Ovary (tissue), 10 donors: ENCODE measurements at regions of chr20 and their contacts with region 1.

Region 1: GRCh38 chr20:44460795-44461141 is 14.9 kb upstream of the TTPAL start:
- DNase-seq: no peak
- H3K4me3 ChIP-seq: no peak overlapping the region
- H3K27ac ChIP-seq: no peak overlapping the region
- H3K4me1 ChIP-seq: no peaks in the 10 kb centered on the region
- H3K27me3 ChIP-seq: no peaks in the 10 kb centered on the region
- CTCF ChIP-seq: peak; percentile 51 to 71 (median 58)
- EP300 ChIP-seq: no peak
- POLR2A ChIP-seq: no peak

Region 2: DNA sequence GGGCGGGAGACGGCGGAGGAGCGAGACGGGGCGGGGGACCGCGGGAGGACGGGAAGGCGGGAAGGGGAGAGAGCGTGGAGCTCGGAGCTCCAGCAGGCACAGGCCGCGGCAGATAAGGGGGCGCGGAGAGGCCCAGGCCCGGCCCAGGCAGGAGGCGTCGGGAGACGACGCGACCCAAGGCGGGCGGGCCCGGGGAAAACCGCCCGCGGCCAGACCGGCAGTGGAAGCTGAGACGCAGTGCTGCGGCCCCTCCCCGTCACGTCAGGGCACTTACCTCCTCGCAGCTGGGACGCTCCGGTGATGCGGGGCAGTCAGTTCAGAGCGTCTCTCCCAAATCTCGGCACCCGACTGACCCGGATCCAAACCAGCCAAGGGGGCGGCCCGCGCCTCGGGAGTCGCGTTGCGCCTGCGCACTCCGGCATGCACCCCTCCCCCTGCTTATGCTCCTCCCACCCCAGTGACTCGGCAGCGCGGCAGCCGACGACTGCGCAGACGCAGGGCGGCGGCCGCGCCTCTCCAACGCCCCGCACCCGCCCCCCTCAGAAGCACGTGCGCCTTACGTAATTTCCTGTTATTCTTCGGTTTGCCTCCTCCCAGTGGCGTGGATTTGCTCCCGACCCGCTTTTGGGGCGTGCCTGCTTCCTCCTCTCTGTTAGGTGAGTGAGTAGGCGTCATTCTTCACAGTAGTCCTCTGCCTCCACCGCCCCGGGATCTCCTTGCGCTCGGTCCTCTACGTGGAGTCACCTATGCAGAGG is 250.2 kb before region 1 on chr20 and contains the start of gene OSER1:
- intact Hi-C with region 1: loop called in 2 of 4 experiments (anchors 5 to 10 kb)
- DNase-seq: peak; percentile 96 to 99 (median 98)
- H3K4me3 ChIP-seq: peak within 1 kb of the TSS; percentile 70
- H3K27ac ChIP-seq: peak within 1 kb of the TSS; percentile 86 to 98
- H3K4me1 ChIP-seq: peaks cover 1% of the 10 kb centered on the region
- H3K27me3 ChIP-seq: no peaks in the 10 kb centered on the region
- CTCF ChIP-seq: peak in 1 of 3 donors; percentile 5
- EP300 ChIP-seq: peak; percentile 88
- POLR2A ChIP-seq: peak; percentile 92
- total RNA-seq, gene OSER1: 27.7 to 40.1 (median 37.2) TPM

Region 3: GRCh38 chr20:44217342-44218092 is 243.3 kb before region 1 on chr20:
- intact Hi-C with region 1: loop called in 2 of 4 experiments (anchors 5 to 10 kb)
- DNase-seq: peak; percentile 49 to 63 (median 59)
- H3K4me3 ChIP-seq: no peak overlapping the region
- H3K27ac ChIP-seq: no peak overlapping the region
- H3K4me1 ChIP-seq: peaks cover 3% of the 10 kb centered on the region
- H3K27me3 ChIP-seq: no peaks in the 10 kb centered on the region
- CTCF ChIP-seq: peak; percentile 34 to 60 (median 43)
- EP300 ChIP-seq: no peak
- POLR2A ChIP-seq: no peak

Region 4: DNA sequence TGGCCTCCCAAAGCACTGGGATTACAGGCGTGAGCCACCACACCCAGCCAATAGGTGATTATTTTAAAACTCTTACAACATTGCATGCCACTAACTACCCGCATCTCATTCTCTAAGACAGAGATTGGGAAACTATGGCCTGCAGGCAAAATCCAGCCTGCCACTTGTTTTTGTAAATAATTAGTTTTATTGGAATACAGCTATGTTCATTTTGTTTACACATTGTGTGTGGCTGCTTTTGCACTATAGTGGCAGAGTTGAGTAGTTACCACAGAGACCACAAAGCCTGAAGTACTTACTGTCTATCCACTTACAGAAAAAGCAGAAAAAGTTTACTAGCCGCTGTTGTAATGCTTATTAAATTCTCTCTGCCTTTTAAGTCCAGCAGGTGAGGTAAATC is 105.2 kb after region 1 on chr20:
- intact Hi-C with region 1: no loop called
- DNase-seq: no peak
- H3K4me3 ChIP-seq: no peak overlapping the region
- H3K27ac ChIP-seq: no peak overlapping the region
- H3K4me1 ChIP-seq: peaks cover 4% of the 10 kb centered on the region
- H3K27me3 ChIP-seq: no peaks in the 10 kb centered on the region
- CTCF ChIP-seq: no peak
- EP300 ChIP-seq: no peak
- POLR2A ChIP-seq: no peak

Region 5: DNA sequence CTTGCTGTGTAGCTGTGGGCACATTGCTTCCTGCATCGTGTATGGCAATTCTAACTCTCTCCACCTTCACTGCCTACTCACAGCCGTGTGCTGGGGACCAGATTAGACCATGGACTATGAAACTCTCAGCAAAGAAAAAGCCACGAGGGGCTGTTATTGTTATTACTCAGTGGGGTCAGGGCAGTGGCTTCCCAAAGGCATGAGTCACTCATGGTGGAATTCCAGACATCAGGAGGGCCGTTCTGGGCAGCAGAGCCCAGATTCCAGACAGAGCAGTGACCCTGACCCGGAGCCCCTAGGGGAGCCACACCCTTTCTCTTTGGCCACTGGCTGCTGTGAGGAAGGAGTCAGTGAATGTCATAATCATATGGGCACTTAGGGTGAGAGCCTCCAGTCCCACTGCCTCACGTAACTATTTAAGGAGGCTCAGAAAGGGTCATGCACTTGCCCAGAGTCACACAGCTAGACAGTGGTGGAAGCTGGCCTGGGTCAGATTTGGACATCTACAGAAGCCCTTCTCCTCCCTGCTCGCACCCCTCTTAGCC is 232.2 kb after region 1 on chr20:
- intact Hi-C with region 1: no loop called
- DNase-seq: peak; percentile 83 to 92 (median 90)
- H3K4me3 ChIP-seq: no peak overlapping the region
- H3K27ac ChIP-seq: peak overlapping the region; percentile 36 to 52
- H3K4me1 ChIP-seq: peaks cover 29% of the 10 kb centered on the region
- H3K27me3 ChIP-seq: no peaks in the 10 kb centered on the region
- CTCF ChIP-seq: no peak
- EP300 ChIP-seq: peak; percentile 82
- POLR2A ChIP-seq: no peak